ENCODE measurements at regions of chr11 and their contacts with region 1.

Region 1: GRCh38 chr11:78961247-78961646 is 386.6 kb upstream of the NARS2 start:
- DNase-seq: peak in 1 of 2 donors; percentile 17
- ATAC-seq: peak in 7 of 8 donors; percentile 43 to 78 (median 65)
- H3K4me3 ChIP-seq: no peak overlapping the region
- H3K27ac ChIP-seq: no peak overlapping the region
- H3K4me1 ChIP-seq: peaks cover 0 to 20% (median 5%) of the 10 kb centered on the region in 9 donors
- H3K27me3 ChIP-seq: peaks cover 0 to 58% (median 23%) of the 10 kb centered on the region in 7 donors
- CTCF ChIP-seq: peak in 7 of 9 donors; percentile 42 to 59 (median 51)

Region 2: DNA sequence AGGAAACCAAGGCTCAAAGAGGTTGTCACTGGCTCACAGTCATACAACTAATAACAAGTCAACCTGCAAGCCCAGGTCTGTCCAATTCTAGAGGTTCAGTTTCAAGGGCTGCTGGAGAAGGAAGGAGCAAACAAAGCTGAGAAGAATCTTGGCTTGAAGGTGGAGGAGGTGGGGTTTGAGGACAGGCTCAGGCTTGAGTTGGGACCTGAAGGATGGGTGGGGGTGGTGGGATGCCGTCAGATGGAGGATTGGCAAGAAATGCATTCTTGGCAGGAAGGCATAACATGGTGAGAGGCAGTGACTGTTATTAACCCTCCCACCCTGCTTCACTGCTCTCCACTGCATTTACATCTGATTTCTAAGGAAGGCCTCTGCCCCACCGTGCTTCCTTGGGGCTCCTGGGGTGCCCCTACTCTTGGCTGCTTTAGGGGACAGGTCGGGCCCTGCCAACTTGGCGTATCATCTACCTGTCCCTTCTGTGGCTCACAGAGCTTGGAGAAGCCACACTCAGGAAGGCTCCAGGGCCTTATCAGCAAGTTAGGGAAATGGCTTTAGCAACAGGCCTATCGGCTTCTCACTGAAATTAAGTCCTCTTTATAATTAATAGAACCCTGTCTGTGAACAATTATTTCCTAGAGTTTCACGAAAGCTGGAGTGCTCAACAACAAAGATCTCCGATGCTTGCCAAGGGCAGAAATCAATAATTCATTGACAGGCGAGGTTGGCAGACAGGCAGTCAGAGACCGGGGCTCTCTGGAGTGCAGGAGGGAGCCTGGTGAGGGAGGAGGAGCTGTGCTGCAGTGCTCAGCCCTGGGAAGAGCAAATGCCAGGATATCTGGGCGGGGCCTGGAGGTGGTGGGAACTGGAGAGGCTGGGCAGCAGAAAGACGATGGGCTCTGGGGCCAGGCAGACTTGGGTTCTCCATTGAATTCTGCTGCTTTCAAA is 301.6 kb before region 1 on chr11:
- intact Hi-C with region 1: loop called in 1 of 10 experiments (anchors 10 kb)
- DNase-seq: no peak
- ATAC-seq: no peak
- H3K4me3 ChIP-seq: no peak overlapping the region
- H3K27ac ChIP-seq: no peak overlapping the region
- H3K4me1 ChIP-seq: no peaks in the 10 kb centered on the region
- H3K27me3 ChIP-seq: no peaks in the 10 kb centered on the region
- CTCF ChIP-seq: no peak

Region 3: GRCh38 chr11:78798660-78799059 is 162.6 kb before region 1 on chr11:
- intact Hi-C with region 1: loop called in 5 of 10 experiments (anchors 2 to 10 kb)
- DNase-seq: peak; percentile 75 to 76
- ATAC-seq: peak; percentile 72 to 93 (median 86)
- H3K4me3 ChIP-seq: no peak overlapping the region
- H3K27ac ChIP-seq: peak overlapping the region in 1 of 10 donors; percentile 81
- H3K4me1 ChIP-seq: peaks cover 0 to 51% (median 21%) of the 10 kb centered on the region in 9 donors
- H3K27me3 ChIP-seq: no peaks in the 10 kb centered on the region
- CTCF ChIP-seq: peak; percentile 66 to 89 (median 82)

Region 4: DNA sequence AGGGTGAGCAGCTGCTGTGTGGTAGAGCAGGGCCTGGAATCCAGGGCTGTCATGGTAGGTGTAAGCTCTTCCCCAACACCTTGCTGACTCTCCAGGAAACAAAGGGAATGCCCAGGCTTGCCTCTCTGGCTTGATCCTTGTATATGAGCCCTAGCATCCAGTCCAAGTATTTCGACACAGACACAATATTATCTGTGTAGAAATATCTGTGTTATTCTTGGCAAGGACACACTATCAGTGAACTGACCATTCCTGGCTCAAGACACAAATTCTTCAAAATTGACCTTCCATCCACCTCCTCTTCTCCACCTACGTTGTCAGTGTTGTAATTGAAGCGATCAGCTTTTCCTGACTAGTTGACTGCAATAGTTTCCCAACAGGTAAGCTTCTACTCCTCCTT is 74.6 kb before region 1 on chr11:
- intact Hi-C with region 1: no loop called
- DNase-seq: no peak
- ATAC-seq: peak in 6 of 8 donors; percentile 44 to 75 (median 48)
- H3K4me3 ChIP-seq: no peak overlapping the region
- H3K27ac ChIP-seq: no peak overlapping the region
- H3K4me1 ChIP-seq: peaks cover 0 to 8% (median 5%) of the 10 kb centered on the region in 9 donors
- H3K27me3 ChIP-seq: peaks cover 0 to 4% (median 0%) of the 10 kb centered on the region in 7 donors
- CTCF ChIP-seq: no peak